Heart right ventricle (tissue), 16 donors: ENCODE measurements at regions of chr3 and their contacts with region 1.

Region 1: GRCh38 chr3:150721285-150722130 is 17.8 kb upstream of the ERICH6 start:
- DNase-seq: no peak
- ATAC-seq: peak in 7 of 8 donors; percentile 51 to 79 (median 73)
- H3K4me3 ChIP-seq: no peak overlapping the region
- H3K27ac ChIP-seq: no peak overlapping the region
- H3K4me1 ChIP-seq: peaks cover 0 to 8% (median 4%) of the 10 kb centered on the region in 9 donors
- H3K27me3 ChIP-seq: no peaks in the 10 kb centered on the region
- CTCF ChIP-seq: peak; percentile 75 to 87 (median 83)

Region 2: GRCh38 chr3:150681057-150681456 is 40.5 kb before region 1 on chr3:
- intact Hi-C with region 1: no loop called
- DNase-seq: no peak
- ATAC-seq: no peak
- H3K4me3 ChIP-seq: no peak overlapping the region
- H3K27ac ChIP-seq: no peak overlapping the region
- H3K4me1 ChIP-seq: no peaks in the 10 kb centered on the region
- H3K27me3 ChIP-seq: peaks cover 0 to 3% (median 0%) of the 10 kb centered on the region in 7 donors
- CTCF ChIP-seq: no peak

Region 3: DNA sequence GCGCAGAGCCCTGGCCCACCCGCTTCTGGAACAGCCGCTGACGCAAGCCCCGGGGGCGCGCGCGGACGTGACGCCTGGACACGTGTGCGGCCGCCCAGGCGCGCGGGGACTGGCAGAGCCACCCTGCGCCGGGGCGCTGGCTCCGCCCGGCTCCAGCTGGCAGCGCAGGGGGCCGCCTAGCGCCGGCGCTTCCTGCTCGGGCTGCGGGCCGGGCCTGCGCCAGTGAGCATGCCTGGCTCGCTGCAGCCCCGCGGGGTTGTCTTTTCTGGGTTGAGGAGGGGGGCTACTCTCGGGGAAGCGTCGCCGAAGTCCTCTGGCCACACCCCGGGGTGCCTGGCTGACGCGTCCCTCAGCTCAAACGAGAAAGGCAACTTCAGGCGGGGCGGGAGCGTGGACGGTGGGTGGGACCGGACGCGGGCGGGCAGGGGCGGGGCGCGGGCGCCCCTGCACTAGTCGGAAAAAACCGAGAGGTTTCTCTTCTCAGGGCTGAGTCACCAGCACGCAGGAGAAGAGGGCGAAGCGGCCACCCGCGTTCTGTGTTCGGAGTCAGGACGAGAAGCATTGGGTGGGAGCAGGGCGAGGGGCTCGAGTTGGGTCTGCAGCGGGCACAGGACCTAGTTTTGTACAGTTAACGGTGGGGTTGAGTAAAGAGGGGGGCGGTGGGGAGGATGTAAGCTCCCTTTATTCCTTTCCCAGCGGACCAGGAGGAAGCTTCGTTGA is 41.8 kb after region 1 on chr3 and contains the start of gene SIAH2:
- intact Hi-C with region 1: loop called in 4 of 10 experiments (anchors 5 kb)
- DNase-seq: peak; percentile 92 to 93
- ATAC-seq: peak; percentile 90 to 97 (median 94)
- H3K4me3 ChIP-seq: peak within 1 kb of the TSS; percentile 64 to 100 (median 81)
- H3K27ac ChIP-seq: peak within 1 kb of the TSS; percentile 94 to 99 (median 97)
- H3K4me1 ChIP-seq: peaks cover 4 to 47% (median 33%) of the 10 kb centered on the region in 9 donors
- H3K27me3 ChIP-seq: no peaks in the 10 kb centered on the region
- CTCF ChIP-seq: no peak
- total RNA-seq, gene SIAH2: 11.5 to 30.7 (median 20.8) TPM

Region 4: GRCh38 chr3:150775091-150775501 is 53.6 kb after region 1 on chr3:
- intact Hi-C with region 1: loop called in 4 of 10 experiments (anchors 10 kb)
- DNase-seq: no peak
- ATAC-seq: no peak
- H3K4me3 ChIP-seq: no peak overlapping the region
- H3K27ac ChIP-seq: no peak overlapping the region
- H3K4me1 ChIP-seq: peaks cover 0 to 15% (median 0%) of the 10 kb centered on the region in 9 donors
- H3K27me3 ChIP-seq: no peaks in the 10 kb centered on the region
- CTCF ChIP-seq: no peak

Region 5: DNA sequence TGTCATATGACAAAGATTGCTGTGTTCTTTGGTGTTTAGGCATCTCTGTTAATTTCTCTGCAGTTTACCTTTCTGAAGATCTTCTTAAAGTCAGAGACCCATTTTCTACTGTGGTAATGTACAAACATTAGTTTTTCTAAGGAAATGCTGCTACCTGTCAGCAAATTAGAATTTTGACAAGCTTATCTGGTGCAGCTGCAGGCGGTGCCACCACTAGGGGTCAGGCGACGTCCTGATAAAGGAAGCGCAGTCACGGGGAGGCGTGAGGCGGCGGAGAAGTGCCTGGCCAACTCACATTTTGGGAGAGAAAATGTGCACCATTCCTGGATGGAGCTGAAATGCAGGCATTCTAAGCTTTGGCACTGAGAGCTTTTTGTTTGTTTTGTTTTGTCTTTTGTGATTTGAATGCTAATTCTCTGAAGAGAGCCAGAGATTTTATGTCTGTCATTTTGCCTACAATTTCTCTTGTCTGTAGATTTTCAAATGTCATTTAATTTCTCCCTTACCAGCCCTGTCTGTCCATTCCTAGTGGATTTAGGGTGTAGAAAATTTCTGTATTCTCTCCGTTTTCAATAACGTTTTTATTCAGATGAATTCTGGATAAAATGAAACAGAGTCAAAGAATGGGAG is 66.3 kb after region 1 on chr3:
- intact Hi-C with region 1: loop called in 5 of 10 experiments (anchors 1 to 10 kb)
- DNase-seq: peak; percentile 77 to 83
- ATAC-seq: peak in 7 of 8 donors; percentile 81 to 91 (median 84)
- H3K4me3 ChIP-seq: no peak overlapping the region
- H3K27ac ChIP-seq: no peak overlapping the region
- H3K4me1 ChIP-seq: peaks cover 0 to 7% (median 0%) of the 10 kb centered on the region in 9 donors
- H3K27me3 ChIP-seq: peaks cover 0 to 14% (median 0%) of the 10 kb centered on the region in 7 donors
- CTCF ChIP-seq: peak; percentile 84 to 96 (median 91)

Region 6: DNA sequence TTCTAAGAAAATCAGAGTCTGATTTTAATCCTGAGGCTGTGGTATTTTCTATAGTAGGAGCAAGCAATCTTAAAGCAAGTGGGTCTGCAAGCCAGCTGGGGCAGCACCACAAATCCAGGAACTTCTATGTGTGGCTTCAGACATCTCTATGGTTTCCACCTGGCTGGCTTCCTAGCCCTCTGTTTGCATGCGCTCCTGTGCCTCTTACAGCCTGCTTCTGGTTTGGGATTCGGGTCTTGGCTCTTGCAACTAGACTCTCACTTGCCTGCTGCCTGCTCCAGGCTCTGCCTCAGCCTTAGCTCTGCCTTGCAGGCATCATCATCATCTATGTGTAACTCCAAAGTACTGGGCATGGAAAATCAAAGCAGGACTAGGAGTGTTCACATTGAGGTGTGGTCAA is 140.3 kb after region 1 on chr3:
- intact Hi-C with region 1: loop called (anchors 1 to 5 kb)
- DNase-seq: no peak
- ATAC-seq: no peak
- H3K4me3 ChIP-seq: no peak overlapping the region
- H3K27ac ChIP-seq: no peak overlapping the region
- H3K4me1 ChIP-seq: peaks cover 0 to 6% (median 0%) of the 10 kb centered on the region in 9 donors
- H3K27me3 ChIP-seq: no peaks in the 10 kb centered on the region
- CTCF ChIP-seq: no peak

Region 7: GRCh38 chr3:150870396-150870795 is 148.9 kb after region 1 on chr3:
- intact Hi-C with region 1: loop called in 7 of 10 experiments (anchors 1 to 5 kb)
- DNase-seq: no peak
- ATAC-seq: peak in 4 of 8 donors; percentile 48 to 85 (median 75)
- H3K4me3 ChIP-seq: no peak overlapping the region
- H3K27ac ChIP-seq: peak overlapping the region in 4 of 10 donors; percentile 32 to 54 (median 46)
- H3K4me1 ChIP-seq: peaks cover 0 to 15% (median 0%) of the 10 kb centered on the region in 9 donors
- H3K27me3 ChIP-seq: no peaks in the 10 kb centered on the region
- CTCF ChIP-seq: no peak

Region 8: DNA sequence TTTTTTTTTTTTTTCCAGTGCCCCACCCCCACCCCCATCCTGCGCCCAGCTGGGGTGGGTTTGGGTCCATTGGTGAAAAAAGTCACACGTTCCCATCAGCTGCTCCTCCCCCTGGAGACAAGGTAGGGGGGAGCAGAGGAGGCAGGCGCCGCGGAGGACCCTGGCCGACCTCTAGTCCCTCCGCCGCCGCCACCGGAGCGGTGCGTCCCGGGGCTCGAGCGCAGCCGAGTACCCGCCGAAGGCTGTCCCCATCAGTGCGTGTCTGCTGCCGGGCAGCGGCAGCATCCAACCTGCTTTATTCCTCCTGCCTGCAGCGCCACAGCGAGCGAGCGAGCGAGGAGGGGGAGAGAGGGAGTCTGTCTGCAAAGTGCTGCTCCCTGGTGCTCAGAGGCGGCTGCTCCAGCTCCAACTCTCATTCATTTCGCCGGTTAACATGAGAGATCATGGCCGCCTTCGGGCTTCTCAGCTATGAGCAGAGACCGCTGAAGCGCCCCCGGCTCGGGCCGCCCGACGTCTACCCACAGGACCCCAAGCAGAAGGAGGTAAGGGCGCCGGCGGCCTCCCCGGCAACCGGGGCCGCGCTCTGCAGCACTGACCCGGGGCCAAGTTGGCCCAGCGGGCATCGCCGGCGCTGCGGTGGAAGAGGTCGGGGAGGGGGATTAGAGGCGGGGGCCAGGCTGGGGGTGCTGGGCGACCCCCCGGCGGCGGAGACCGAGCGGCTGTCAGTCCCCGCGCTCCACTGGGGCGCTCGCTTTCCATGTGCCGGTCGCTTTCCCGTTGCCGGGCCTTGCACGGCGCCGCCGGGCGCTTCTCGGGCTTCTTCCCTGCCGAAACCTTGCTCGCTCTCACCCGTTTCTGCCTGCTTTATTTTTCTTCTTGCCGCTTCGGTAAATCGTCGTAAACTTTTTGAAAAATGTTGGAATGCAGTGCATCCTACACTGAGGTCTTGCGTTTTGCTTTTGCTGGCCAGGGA is 365.3 kb after region 1 on chr3:
- intact Hi-C with region 1: loop called in 1 of 10 experiments (anchors 5 kb)
- DNase-seq: peak; percentile 67 to 68
- ATAC-seq: peak; percentile 82 to 93 (median 89)
- H3K4me3 ChIP-seq: peak overlapping the region; percentile 37 to 75 (median 66)
- H3K27ac ChIP-seq: peak overlapping the region in 5 of 10 donors; percentile 31 to 65 (median 36)
- H3K4me1 ChIP-seq: peaks cover 0 to 27% (median 15%) of the 10 kb centered on the region in 9 donors
- H3K27me3 ChIP-seq: peaks cover 0 to 65% (median 33%) of the 10 kb centered on the region in 7 donors
- CTCF ChIP-seq: peak in 8 of 9 donors; percentile 21 to 66 (median 42)